ENCODE measurements at regions of chr4 and their contacts with region 1.

Region 1: GRCh38 chr4:109815151-109816081 is at the start of gene GAR1:
- DNase-seq: peak; percentile 91
- ATAC-seq: peak; percentile 96
- H3K4me3 ChIP-seq: peak within 1 kb of the TSS; percentile 88 to 98 (median 94)
- H3K4me3 Mint-ChIP-seq: peak within 1 kb of the TSS; percentile 99
- H3K27ac ChIP-seq: peak within 1 kb of the TSS; percentile 80 to 92
- H3K27ac Mint-ChIP-seq: peak within 1 kb of the TSS; percentile 97
- H3K4me1 ChIP-seq: peaks cover 14 to 16% of the 10 kb centered on the region in 2 donors
- H3K4me1 Mint-ChIP-seq: peaks cover 30% of the 10 kb centered on the region
- H3K27me3 ChIP-seq: no peaks in the 10 kb centered on the region
- H3K27me3 Mint-ChIP-seq: no peaks in the 10 kb centered on the region
- CTCF ChIP-seq: no peak
- total RNA-seq, gene GAR1: 10.0 and 11.0 TPM in 2 replicates

Region 2: DNA sequence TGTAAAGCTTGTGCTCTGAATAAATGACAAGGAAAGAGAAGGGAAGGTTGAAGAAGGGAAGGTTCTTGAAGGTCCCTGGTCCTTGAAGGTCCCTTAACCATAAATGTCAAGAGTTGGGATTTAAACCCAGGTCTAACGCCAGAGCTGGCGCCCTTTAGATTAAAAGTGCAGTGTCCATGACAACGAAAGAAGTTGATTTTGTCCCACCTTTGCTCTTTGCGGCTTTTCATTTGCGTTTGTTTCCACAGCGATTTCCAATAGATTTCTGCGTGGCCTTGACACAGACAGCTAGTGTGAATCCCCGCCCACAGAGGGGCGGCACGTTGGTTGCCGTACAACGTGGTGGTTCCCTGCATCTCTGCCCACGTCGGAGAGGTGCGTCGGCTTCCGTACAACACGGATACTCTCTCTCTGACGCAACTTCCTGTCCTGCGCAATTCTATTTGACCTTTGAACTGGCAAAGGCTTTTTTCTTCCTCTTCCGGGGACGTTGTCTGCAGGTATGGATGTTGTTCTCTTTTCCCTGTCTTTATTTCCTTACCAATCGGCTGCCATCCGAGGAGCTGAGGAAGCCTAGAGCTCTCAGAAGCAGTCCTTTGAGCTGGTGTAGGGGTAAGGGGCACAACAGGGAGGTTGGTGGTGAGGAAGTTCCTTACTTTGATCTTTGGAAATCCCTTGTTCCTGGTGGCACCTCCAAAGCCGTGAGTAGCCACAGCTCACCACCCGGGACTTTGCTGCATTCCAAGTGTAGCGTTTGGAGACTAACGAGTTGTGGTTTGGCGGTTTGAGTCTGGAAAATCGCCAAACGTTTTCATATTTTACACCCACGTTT is 1195.1 kb before region 1 on chr4 and contains the start of gene RPL34:
- CTCF ChIA-PET with region 1: no interaction called
- POLR2A ChIA-PET with region 1: no interaction called
- intact Hi-C with region 1: loop called (anchors 10 kb)
- DNase-seq: peak; percentile 98
- ATAC-seq: peak; percentile 100
- H3K4me3 ChIP-seq: peak within 1 kb of the TSS; percentile 86 to 100 (median 98)
- H3K4me3 Mint-ChIP-seq: peak within 1 kb of the TSS; percentile 96
- H3K27ac ChIP-seq: peak within 1 kb of the TSS; percentile 87 to 88
- H3K27ac Mint-ChIP-seq: peak within 1 kb of the TSS; percentile 93
- H3K4me1 ChIP-seq: peaks cover 20 to 24% of the 10 kb centered on the region in 2 donors
- H3K4me1 Mint-ChIP-seq: peaks cover 44% of the 10 kb centered on the region
- H3K27me3 ChIP-seq: no peaks in the 10 kb centered on the region
- H3K27me3 Mint-ChIP-seq: no peaks in the 10 kb centered on the region
- CTCF ChIP-seq: no peak
- total RNA-seq, gene RPL34: 2,198 and 2,267 TPM in 2 replicates

Region 3: GRCh38 chr4:108650212-108651013 is 1165.0 kb before region 1 on chr4 and contains the start of gene OSTC:
- CTCF ChIA-PET with region 1: no interaction called
- POLR2A ChIA-PET with region 1: no interaction called
- intact Hi-C with region 1: loop called (anchors 10 kb)
- DNase-seq: peak; percentile 96
- ATAC-seq: peak; percentile 95
- H3K4me3 ChIP-seq: peak within 1 kb of the TSS; percentile 79 to 96 (median 87)
- H3K4me3 Mint-ChIP-seq: peak within 1 kb of the TSS; percentile 95
- H3K27ac ChIP-seq: peak within 1 kb of the TSS; percentile 77 to 91
- H3K27ac Mint-ChIP-seq: peak within 1 kb of the TSS; percentile 96
- H3K4me1 ChIP-seq: peaks cover 9 to 15% of the 10 kb centered on the region in 2 donors
- H3K4me1 Mint-ChIP-seq: peaks cover 37% of the 10 kb centered on the region
- H3K27me3 ChIP-seq: no peaks in the 10 kb centered on the region
- H3K27me3 Mint-ChIP-seq: no peaks in the 10 kb centered on the region
- CTCF ChIP-seq: no peak
- total RNA-seq, gene OSTC: 38.9 and 39.9 TPM in 2 replicates

Region 4: DNA sequence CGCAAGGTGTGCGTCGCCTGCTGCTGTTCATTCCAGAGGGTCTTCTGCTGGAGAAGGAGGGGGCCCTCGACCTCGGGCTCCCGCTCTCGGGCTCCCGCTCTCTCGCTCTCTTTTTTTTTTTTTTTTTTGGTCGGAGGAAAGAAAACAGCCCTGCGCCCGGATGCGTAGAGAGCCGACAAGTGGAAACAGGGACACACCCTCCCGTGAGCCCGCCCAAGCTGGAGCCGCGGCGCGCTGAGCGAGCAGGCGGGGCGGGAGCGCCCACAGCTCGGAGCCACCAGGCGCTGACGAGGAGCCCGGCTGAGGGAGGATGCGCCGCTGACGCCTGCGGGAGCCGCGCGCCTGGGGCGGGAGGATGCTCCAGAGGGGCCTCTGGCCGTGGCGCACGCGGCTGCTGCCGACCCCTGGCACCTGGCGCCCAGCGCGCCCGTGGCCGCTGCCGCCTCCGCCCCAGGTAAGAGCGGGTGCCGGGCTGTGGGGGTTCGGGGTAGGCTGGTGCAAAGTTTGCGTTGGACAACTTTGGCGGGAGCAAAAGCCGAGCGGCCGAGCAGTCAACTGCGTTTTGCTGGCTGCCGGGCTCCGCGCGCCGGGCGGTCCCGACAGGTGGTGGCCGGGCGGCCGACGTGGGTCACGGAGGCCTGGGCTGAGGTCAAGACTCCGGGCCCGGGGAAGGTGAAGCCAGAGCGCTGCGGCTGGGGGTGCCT is 255.3 kb before region 1 on chr4 and contains the start of gene MCUB:
- CTCF ChIA-PET with region 1: no interaction called
- POLR2A ChIA-PET with region 1: no interaction called
- intact Hi-C with region 1: loop called (anchors 1 kb)
- DNase-seq: peak; percentile 89
- ATAC-seq: peak; percentile 82
- H3K4me3 ChIP-seq: peak within 1 kb of the TSS; percentile 83 to 93 (median 91)
- H3K4me3 Mint-ChIP-seq: peak within 1 kb of the TSS; percentile 100
- H3K27ac ChIP-seq: peak within 1 kb of the TSS; percentile 77 to 83
- H3K27ac Mint-ChIP-seq: peak within 1 kb of the TSS; percentile 100
- H3K4me1 ChIP-seq: peaks cover 17 to 19% of the 10 kb centered on the region in 2 donors
- H3K4me1 Mint-ChIP-seq: peaks cover 50% of the 10 kb centered on the region
- H3K27me3 ChIP-seq: no peaks in the 10 kb centered on the region
- H3K27me3 Mint-ChIP-seq: no peaks in the 10 kb centered on the region
- CTCF ChIP-seq: no peak
- total RNA-seq, gene MCUB: 52.4 and 59.3 TPM in 2 replicates

Region 5: GRCh38 chr4:109578846-109579245 is 236.6 kb before region 1 on chr4:
- CTCF ChIA-PET with region 1: no interaction called
- POLR2A ChIA-PET with region 1: no interaction called
- intact Hi-C with region 1: no loop called
- DNase-seq: no peak
- ATAC-seq: no peak
- H3K4me3 ChIP-seq: no peak overlapping the region
- H3K4me3 Mint-ChIP-seq: no peak overlapping the region
- H3K27ac ChIP-seq: no peak overlapping the region
- H3K27ac Mint-ChIP-seq: no peak overlapping the region
- H3K4me1 ChIP-seq: peaks cover 4 to 7% of the 10 kb centered on the region in 2 donors
- H3K4me1 Mint-ChIP-seq: peaks cover 42% of the 10 kb centered on the region
- H3K27me3 ChIP-seq: no peaks in the 10 kb centered on the region
- H3K27me3 Mint-ChIP-seq: no peaks in the 10 kb centered on the region
- CTCF ChIP-seq: no peak

Region 6: DNA sequence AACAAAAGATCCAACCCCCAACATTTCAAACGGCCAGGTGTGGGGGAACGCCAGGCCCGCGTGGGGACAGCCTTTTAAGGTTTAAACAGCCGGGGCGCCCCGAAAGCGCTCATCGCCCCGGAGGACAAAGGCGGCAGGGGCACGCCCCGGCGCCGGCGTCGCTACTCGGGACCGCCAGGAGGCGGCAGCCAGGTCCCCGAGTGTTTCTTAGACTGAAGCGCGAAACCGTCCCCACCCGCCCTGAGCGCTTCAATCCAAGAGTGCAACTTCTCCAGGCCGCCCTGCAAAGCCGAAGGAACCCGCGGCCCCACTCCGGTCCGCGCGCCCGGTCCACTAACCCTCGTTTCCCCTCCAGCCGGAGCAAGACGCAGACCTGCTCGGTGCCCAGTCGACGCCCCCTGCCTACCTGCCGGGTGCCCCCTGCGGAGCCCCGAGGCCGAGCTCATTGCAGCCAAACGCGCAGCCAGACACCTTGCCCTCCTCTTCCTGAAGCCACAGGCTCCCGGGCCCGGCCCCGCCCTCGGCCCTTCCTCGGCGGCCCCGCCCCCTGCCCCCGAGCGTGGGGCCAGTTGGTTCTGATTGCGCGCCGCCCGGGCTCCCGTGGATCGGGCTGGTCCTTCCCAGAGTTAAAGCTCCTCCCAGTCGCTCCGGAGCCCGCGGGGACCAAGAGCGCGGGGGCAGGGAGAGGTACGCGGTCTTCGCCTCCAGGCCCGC is 112.3 kb before region 1 on chr4 and contains the start of gene CASP6:
- CTCF ChIA-PET with region 1: interaction called, 3 read pairs
- POLR2A ChIA-PET with region 1: no interaction called
- intact Hi-C with region 1: loop called (anchors 2 kb)
- DNase-seq: peak; percentile 78
- ATAC-seq: peak; percentile 80
- H3K4me3 ChIP-seq: peak within 1 kb of the TSS; percentile 69 to 86 (median 78)
- H3K4me3 Mint-ChIP-seq: peak within 1 kb of the TSS; percentile 97
- H3K27ac ChIP-seq: peak within 1 kb of the TSS; percentile 11 to 57
- H3K27ac Mint-ChIP-seq: peak within 1 kb of the TSS; percentile 88
- H3K4me1 ChIP-seq: peaks cover 14 to 18% of the 10 kb centered on the region in 2 donors
- H3K4me1 Mint-ChIP-seq: peaks cover 22% of the 10 kb centered on the region
- H3K27me3 ChIP-seq: no peaks in the 10 kb centered on the region
- H3K27me3 Mint-ChIP-seq: no peaks in the 10 kb centered on the region
- CTCF ChIP-seq: peak; percentile 72
- total RNA-seq, gene CASP6: 7.7 and 8.3 TPM in 2 replicates

Region 7: GRCh38 chr4:109729718-109730618 is 85.4 kb before region 1 on chr4 and contains the start of gene PLA2G12A:
- CTCF ChIA-PET with region 1: no interaction called
- POLR2A ChIA-PET with region 1: no interaction called
- intact Hi-C with region 1: loop called (anchors 1 kb)
- DNase-seq: peak; percentile 90
- ATAC-seq: peak; percentile 88
- H3K4me3 ChIP-seq: peak within 1 kb of the TSS; percentile 75 to 95 (median 83)
- H3K4me3 Mint-ChIP-seq: peak within 1 kb of the TSS; percentile 94
- H3K27ac ChIP-seq: peak within 1 kb of the TSS; percentile 41 to 68
- H3K27ac Mint-ChIP-seq: peak within 1 kb of the TSS; percentile 84
- H3K4me1 ChIP-seq: peaks cover 6 to 10% of the 10 kb centered on the region in 2 donors
- H3K4me1 Mint-ChIP-seq: peaks cover 13% of the 10 kb centered on the region
- H3K27me3 ChIP-seq: no peaks in the 10 kb centered on the region
- H3K27me3 Mint-ChIP-seq: no peaks in the 10 kb centered on the region
- CTCF ChIP-seq: no peak
- total RNA-seq, gene PLA2G12A: 7.9 and 8.5 TPM in 2 replicates

Region 8: DNA sequence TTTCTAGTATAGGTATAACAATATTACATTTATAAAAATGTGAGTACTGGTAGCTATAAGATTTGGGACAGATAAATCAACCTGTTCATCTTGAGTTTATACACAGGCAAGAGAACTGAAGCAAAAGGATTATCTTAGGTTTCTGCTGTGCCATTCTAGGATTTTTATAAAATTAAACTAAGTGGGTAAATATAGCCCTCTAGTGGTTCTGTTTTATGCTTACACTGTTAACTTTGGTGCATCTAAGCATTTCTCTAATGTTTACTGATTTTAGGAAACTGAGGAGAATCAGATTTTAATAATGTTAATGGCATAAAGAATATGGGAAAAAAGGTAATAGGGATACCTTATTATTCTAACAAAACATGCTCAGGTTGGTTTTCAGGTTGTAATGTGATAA is 11.3 kb after region 1 on chr4:
- CTCF ChIA-PET with region 1: interaction called, 5 read pairs
- POLR2A ChIA-PET with region 1: no interaction called
- intact Hi-C with region 1: loop called (anchors 1 kb)
- DNase-seq: peak; percentile 30
- ATAC-seq: peak; percentile 24
- H3K4me3 ChIP-seq: no peak overlapping the region
- H3K4me3 Mint-ChIP-seq: no peak overlapping the region
- H3K27ac ChIP-seq: no peak overlapping the region
- H3K27ac Mint-ChIP-seq: no peak overlapping the region
- H3K4me1 ChIP-seq: no peaks in the 10 kb centered on the region
- H3K4me1 Mint-ChIP-seq: no peaks in the 10 kb centered on the region
- H3K27me3 ChIP-seq: no peaks in the 10 kb centered on the region
- H3K27me3 Mint-ChIP-seq: no peaks in the 10 kb centered on the region
- CTCF ChIP-seq: peak; percentile 76

Region 9: DNA sequence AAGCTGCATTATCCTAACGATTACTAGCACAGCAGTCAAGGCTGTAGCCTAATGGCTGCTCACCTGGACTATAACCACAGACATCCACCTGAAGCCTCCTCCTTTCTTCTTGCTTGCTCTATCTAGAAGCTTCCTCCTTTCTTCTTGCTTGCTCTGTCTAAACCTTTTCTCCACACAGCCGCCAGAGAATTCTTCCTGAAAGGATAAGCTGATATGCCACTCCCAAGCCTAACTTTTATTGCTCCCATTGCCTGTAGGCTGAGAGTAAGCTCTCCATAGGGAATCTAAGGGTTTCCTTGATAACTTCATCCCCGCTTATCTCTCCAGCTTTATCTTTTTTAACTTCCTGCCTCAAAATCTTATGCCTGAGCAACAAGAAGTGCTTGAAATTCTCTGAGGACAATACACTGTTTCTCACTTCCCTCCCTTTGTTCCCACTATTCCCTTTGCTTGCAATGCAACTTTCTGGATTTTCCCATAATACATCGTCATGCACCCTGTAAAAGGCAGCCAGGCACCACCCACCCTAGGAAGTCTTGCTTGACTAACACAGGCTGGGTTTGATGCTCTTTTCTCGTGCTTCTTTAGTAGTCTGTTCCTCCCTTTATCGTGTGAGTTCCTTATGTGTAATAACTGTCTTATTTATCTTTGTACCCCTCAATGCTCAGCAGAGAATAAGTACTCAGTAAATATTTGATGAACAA is 31.1 kb after region 1 on chr4:
- CTCF ChIA-PET with region 1: no interaction called
- POLR2A ChIA-PET with region 1: no interaction called
- intact Hi-C with region 1: no loop called
- DNase-seq: no peak
- ATAC-seq: no peak
- H3K4me3 ChIP-seq: no peak overlapping the region
- H3K4me3 Mint-ChIP-seq: no peak overlapping the region
- H3K27ac ChIP-seq: no peak overlapping the region
- H3K27ac Mint-ChIP-seq: no peak overlapping the region
- H3K4me1 ChIP-seq: no peaks in the 10 kb centered on the region
- H3K4me1 Mint-ChIP-seq: no peaks in the 10 kb centered on the region
- H3K27me3 ChIP-seq: no peaks in the 10 kb centered on the region
- H3K27me3 Mint-ChIP-seq: no peaks in the 10 kb centered on the region
- CTCF ChIP-seq: no peak